ENCODE measurements at regions of chr6 and their contacts with region 1.

Region 1: GRCh38 chr6:39865011-39865888 is 69.0 kb downstream of the MOCS1 start:
- DNase-seq: peak; percentile 58 to 69
- ATAC-seq: peak in 1 of 2 donors; percentile 73
- H3K4me3 ChIP-seq: no peak overlapping the region
- H3K27ac ChIP-seq: peak overlapping the region in 3 of 4 donors; percentile 18 to 30 (median 29)
- H3K4me1 ChIP-seq: no peaks in the 10 kb centered on the region
- H3K27me3 ChIP-seq: no peaks in the 10 kb centered on the region
- CTCF ChIP-seq: peak; percentile 52 to 86 (median 79)
- POLR2A ChIP-seq: no peak

Region 2: DNA sequence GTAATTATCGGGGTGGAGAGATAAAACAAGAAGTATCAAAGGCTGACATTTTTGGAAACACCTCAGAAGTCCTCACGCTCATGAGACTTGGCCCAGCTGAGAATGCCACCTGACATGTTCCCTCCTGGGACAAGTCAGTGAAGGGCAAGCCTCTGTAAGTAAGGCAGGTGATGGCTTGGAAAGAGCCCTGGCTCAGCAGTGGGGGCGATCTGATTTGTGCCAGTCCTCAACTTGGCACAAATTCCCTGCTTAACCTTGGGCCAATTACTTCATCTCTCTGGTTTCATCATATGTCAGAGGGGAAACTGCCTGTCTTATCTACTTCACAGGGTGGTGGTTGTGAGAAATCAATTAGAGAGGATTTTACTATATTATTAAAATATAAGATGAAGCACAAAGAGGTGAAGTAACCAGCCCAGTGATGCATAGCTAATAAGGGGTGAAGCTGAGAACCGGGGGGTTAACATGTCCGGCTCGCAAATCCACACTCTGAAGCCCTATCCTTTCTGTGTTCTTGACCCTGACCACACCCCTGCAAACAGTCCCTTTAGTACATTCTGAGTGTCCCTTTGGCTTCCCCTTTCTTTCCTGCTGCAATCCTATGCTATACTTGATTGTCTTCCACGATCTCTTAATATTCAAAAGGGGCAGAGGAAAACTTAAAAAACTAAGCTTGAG is 77.8 kb after region 1 on chr6:
- in situ Hi-C with region 1: no loop called
- intact Hi-C with region 1: loop called (anchors 1 kb)
- DNase-seq: peak in 1 of 2 donors; percentile 38
- ATAC-seq: peak in 1 of 2 donors; percentile 40
- H3K4me3 ChIP-seq: no peak overlapping the region
- H3K27ac ChIP-seq: no peak overlapping the region
- H3K4me1 ChIP-seq: peaks cover 10 to 14% of the 10 kb centered on the region in 2 donors
- H3K27me3 ChIP-seq: no peaks in the 10 kb centered on the region
- CTCF ChIP-seq: no peak
- POLR2A ChIP-seq: no peak

Region 3: DNA sequence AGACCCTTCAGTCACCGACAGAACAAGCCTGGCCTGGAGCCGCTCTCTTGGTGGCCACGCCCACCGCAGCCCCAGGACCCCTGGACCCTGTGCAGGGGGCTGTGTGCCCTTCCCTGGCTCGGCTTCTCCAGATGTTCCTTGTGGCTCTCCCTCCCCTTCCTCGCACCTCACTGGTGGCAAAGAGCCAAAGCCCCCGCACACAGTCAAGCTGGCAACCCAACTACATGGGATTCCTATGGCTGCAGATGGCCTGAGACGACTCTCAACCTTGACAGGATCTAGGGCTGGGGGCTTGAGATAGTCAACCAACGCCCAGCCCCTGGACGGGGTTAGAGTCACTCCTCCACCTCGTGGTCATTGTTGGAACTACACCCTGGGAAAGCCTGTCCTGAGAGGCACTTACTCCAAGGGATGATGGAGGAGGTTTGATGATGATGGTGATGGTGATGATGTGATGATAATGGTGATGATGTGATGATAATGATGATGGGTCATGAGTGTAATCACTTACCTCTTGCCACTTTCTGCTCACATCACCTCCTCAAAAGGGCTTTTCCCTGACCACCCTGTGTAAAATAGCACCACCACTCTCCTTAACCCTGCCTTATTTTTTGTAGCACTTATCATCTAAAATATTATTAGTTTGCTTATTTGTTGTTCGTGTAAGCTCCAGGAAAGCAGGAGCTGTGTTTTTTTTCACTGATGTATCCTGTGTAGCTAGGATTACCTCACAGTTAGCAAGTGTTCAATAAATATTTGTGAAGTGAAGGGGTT is 443.5 kb after region 1 on chr6:
- in situ Hi-C with region 1: no loop called
- intact Hi-C with region 1: loop called (anchors 5 kb)
- DNase-seq: peak in 1 of 2 donors; percentile 35
- ATAC-seq: peak in 1 of 2 donors; percentile 58
- H3K4me3 ChIP-seq: no peak overlapping the region
- H3K27ac ChIP-seq: no peak overlapping the region
- H3K4me1 ChIP-seq: peaks cover 0 to 7% of the 10 kb centered on the region in 2 donors
- H3K27me3 ChIP-seq: no peaks in the 10 kb centered on the region
- CTCF ChIP-seq: peak; percentile 83 to 86 (median 84)
- POLR2A ChIP-seq: no peak